Dendritic cell treated with granulocyte-macrophage colony-stimulating factor and Interleukin-4, amounts not matched to agents 40 ng/mL and 50 ng/mL, for 4 days (primary cell): ENCODE measurements at regions of chr6 and their contacts with region 1.

Region 1: GRCh38 chr6:52419809-52420670 is at the start of gene EFHC1:
- H3K4me3 Mint-ChIP-seq: no peak within 1 kb of the TSS
- H3K27ac Mint-ChIP-seq: no peak within 1 kb of the TSS
- H3K4me1 Mint-ChIP-seq: peaks cover 9% of the 10 kb centered on the region
- H3K27me3 Mint-ChIP-seq: peaks cover 4% of the 10 kb centered on the region

Region 2: DNA sequence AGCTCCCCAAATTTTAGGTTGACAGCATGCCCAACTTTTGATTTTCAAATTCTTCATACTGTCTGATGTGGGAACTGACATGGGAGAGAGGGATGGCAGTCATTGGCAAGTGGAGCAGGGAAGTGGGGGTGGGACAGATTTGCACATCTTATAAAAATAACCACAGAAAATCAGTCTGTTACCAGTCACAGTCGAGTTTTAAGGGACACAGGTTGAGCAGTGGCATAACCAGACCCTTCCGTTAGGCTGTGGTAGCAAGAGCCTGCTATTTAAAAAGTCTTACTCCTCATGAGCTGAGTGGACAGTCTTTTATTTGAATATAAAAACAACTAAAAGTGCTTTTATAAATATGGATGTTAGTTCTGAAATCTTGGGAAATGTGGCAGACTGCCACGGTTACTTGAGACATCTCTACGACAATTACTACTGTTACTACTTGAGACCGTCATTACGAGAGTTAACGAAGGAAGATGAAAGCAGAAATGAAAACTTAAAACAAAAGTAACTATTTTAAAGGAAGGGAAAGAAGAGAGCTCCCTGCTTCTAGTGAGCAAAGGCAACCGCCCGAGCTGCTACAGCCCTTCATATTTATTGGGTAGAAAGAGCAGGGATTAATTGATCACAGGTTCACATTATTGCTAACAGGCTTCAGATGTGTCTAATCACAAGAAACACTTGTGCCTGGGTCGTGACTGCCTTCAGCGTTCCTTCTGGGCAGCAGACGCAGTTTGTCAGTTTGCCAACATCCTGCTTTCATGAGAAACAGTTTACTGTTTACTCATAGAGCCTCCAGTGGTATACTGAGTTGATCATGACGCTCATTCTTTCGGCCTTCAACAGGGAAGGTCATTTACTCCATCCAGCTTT is 71.4 kb after region 1 on chr6:
- intact Hi-C with region 1: loop called (anchors 2 kb)
- H3K4me3 Mint-ChIP-seq: peak overlapping the region; percentile 54
- H3K27ac Mint-ChIP-seq: peak overlapping the region; percentile 88
- H3K4me1 Mint-ChIP-seq: peaks cover 53% of the 10 kb centered on the region
- H3K27me3 Mint-ChIP-seq: no peaks in the 10 kb centered on the region

Region 3: DNA sequence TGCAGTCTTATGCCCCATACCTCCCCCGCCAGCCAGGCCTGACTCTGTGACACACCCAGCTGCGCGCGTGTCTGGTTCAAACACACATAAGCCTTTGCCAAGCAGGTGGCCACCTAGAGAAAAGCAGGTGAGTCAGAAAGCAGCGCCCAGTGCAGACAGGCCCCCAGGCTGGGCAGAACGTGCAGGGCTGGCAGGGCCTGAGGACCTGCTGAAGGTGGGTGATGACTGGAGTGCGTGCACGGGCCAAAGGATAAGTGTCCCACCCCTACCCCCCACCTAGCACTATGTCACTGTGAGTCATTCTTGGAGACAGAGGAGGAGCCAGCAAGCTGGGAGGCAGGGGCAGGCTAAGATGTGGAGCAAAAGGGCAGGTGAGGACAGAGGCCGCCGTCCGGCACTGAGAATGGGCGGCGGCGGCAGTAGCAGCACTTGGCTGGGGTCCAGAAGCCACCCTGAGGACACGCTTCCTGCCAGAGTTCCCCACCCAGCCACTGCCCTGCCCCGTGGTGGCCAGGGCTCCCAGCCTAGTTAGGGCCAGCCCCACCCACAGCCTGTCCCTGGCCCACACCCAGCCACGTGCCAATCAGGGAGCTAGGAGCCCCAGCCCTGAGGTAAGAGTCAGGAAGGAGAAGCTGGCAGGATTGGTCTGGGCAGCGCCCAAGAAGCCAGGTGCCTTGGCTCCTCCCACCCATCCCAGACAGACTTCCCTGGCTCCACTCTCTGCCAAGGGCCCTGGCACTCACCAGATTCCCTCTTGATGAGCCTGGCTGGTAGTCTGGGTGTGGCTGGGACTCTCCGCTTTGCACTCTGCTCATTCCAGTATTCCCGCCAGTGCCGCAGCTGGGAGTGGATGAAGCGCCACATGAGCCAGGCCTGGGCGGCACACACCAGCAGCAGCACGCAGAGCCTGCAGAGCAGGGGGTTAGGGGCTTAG is 84.1 kb after region 1 on chr6:
- intact Hi-C with region 1: loop called (anchors 1 kb)
- H3K4me3 Mint-ChIP-seq: peak overlapping the region; percentile 22
- H3K27ac Mint-ChIP-seq: peak overlapping the region; percentile 84
- H3K4me1 Mint-ChIP-seq: peaks cover 56% of the 10 kb centered on the region
- H3K27me3 Mint-ChIP-seq: no peaks in the 10 kb centered on the region

Region 4: DNA sequence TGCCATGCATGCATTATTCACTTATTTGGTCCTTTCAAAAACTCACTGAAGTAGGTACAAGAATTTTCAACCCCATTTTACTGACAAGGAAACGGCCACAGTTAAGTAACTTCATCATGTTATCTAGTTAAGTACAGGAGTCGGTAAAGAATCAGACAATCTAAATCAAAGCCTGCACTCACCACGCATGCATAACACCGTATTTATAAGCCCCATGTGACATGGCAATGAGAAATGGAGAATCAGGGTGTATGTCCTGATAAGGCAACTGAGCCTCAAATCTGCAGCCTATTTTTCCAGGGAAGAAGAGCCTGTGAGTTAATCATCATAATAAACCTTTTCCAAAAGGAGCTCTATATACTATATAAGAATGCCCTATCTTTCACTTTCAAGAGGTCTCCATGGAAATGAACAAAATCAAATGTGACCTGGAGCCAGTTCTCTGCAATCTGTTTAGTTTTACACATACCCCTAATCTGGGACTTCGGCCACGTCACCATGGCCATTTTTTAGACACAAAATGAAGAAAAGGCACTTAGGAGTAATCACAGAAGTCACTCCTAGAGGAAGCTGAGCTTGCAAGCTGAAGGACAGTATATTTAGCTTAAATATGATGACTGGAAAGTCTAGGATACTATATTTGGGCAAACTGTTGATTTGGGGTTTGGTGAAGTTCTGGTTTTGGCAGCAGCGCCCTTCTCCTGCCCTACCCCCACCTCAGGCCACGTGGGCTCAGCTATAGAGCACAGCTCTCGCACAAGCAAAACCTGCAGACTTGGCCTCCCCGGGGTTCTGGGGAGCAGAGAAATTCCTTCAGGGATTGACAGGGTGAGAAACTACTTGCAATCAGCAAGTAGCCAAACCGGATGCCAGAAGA is 137.6 kb after region 1 on chr6:
- intact Hi-C with region 1: no loop called
- H3K4me3 Mint-ChIP-seq: no peak overlapping the region
- H3K27ac Mint-ChIP-seq: no peak overlapping the region
- H3K4me1 Mint-ChIP-seq: peaks cover 44% of the 10 kb centered on the region
- H3K27me3 Mint-ChIP-seq: no peaks in the 10 kb centered on the region

Region 5: DNA sequence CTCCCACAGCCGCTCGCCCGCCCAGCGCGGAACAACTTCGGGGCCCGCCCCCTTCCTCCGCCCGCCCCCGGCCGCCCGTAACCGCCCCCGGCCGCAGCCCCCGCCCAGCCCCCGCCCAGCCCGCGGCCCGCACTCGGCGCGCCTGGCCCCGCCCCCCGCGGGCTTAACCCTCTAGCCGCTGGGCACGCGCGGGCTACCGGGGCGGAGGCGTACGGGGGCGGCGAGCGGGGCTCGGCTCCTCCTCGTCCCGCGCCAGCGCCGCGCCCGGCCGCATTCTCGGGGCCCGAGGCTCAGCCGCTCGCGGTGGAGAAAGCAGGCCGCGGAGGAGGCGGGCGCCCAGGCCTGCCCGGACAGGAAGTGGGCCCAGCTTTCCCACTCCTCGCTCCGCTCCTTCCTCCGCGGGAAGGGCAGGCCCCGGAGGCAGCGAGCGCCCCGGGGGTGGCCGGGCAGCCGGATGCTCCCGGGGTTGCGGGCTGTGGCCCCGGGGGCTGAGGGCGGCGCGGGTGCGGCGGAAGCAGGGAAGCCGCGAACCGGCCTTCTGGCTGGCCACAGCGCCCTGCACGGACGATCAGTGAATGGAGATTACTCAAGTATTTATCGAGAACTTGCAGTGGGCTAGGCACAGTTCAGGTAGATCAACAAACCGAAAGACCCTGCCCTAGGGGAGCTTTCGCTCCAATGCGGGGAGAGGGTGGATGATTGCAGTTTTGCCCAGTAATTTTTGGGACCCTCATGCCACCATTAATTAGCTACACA is 157.2 kb after region 1 on chr6 and contains the start of gene TRAM2:
- intact Hi-C with region 1: loop called (anchors 1 kb)
- H3K4me3 Mint-ChIP-seq: peak within 1 kb of the TSS; percentile 95
- H3K27ac Mint-ChIP-seq: peak within 1 kb of the TSS; percentile 71
- H3K4me1 Mint-ChIP-seq: peaks cover 51% of the 10 kb centered on the region
- H3K27me3 Mint-ChIP-seq: no peaks in the 10 kb centered on the region

Region 6: GRCh38 chr6:52598123-52598823 is 178.2 kb after region 1 on chr6:
- intact Hi-C with region 1: loop called (anchors 5 kb)
- H3K4me3 Mint-ChIP-seq: peak overlapping the region; percentile 44
- H3K27ac Mint-ChIP-seq: peak overlapping the region; percentile 59
- H3K4me1 Mint-ChIP-seq: peaks cover 79% of the 10 kb centered on the region
- H3K27me3 Mint-ChIP-seq: no peaks in the 10 kb centered on the region

Region 7: DNA sequence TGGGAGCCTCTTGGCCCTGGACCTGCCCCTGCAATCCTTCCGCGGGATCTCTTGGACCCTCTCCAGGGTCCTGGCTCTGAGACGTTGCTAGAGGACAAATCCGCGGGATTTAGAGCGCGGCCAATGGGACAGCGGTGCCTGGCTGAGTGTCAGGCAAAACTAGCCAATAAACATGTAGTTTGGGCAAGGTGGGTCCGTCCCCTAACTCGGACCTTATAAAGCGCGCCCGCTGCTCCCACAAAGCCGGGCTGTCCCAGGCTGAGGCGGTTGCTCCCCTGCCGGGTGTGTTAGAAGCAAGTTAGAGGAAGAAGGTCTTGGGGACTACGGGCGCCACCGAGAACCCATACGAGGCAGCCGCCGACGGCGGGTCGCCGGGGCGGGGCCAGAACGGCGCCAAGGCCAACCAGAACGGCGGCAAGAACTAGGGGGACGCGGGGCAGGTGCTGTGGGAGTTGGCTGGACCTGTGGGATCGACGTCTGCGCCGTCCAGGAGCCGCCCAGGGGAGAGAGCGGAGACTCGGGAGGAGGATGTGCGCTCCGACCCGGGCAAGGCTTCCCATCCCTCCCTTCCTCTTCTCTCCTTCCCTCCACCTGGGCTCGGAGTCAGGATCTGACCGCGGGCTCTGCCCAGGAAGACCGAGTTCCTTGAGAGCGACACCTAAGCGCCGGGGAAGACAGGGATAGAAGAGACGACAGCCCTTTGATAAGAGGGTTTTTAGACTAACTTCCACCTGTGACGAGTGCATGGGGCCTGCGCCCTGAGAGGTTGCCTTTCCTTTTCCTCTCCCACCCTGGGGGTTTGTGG is 244.3 kb after region 1 on chr6:
- intact Hi-C with region 1: loop called (anchors 1 kb)
- H3K4me3 Mint-ChIP-seq: no peak overlapping the region
- H3K27ac Mint-ChIP-seq: no peak overlapping the region
- H3K4me1 Mint-ChIP-seq: no peaks in the 10 kb centered on the region
- H3K27me3 Mint-ChIP-seq: peaks cover 17% of the 10 kb centered on the region

Region 8: DNA sequence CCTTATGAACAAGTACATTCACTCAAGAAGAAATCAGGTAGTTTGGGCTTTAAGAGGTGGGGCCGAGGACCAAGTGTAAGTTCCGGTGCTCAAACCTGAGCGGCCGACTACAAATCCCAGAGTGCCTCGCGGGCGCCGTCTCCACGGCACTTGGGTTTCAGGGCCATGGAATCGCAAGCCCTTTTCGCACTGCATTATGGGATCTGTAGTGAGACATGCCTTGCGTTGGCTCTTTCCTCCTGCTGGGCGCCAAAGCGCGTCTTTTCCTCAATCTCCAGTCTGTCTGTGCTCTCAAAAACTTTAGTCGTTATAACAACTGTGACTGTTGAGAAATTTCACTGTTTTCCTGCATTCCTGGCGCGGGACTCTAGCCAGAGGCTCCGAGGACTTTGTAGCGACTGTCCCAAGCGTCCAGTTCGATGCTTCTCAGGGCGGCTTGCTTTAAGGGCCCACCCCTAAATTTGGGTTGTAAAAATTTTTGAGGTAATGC is 644.7 kb after region 1 on chr6:
- intact Hi-C with region 1: loop called (anchors 2 kb)
- H3K4me3 Mint-ChIP-seq: peak overlapping the region; percentile 98
- H3K27ac Mint-ChIP-seq: peak overlapping the region; percentile 96
- H3K4me1 Mint-ChIP-seq: peaks cover 52% of the 10 kb centered on the region
- H3K27me3 Mint-ChIP-seq: no peaks in the 10 kb centered on the region